ENCODE measurements at regions of chr1 and their contacts with region 1.

Region 1: GRCh38 chr1:67814121-67814772 is 19.0 kb downstream of the GNG12 start:
- DNase-seq: no peak
- ATAC-seq: no peak
- H3K4me3 ChIP-seq: no peak overlapping the region
- H3K27ac ChIP-seq: no peak overlapping the region
- H3K4me1 ChIP-seq: no peaks in the 10 kb centered on the region
- H3K27me3 ChIP-seq: no peaks in the 10 kb centered on the region
- CTCF ChIP-seq: no peak
- EP300 ChIP-seq: no peak
- POLR2A ChIP-seq: no peak
- RAD21 ChIP-seq: no peak

Region 2: GRCh38 chr1:67645495-67646144 is 168.6 kb before region 1 on chr1:
- CTCF ChIA-PET with region 1: no interaction called
- POLR2A ChIA-PET with region 1: no interaction called
- RAD21 ChIA-PET with region 1: no interaction called
- SMC1A ChIA-PET with region 1: no interaction called
- in situ Hi-C with region 1: no loop called
- intact Hi-C with region 1: no loop called
- DNase-seq: no peak
- ATAC-seq: no peak
- H3K4me3 ChIP-seq: no peak overlapping the region
- H3K27ac ChIP-seq: no peak overlapping the region
- H3K4me1 ChIP-seq: no peaks in the 10 kb centered on the region
- H3K27me3 ChIP-seq: no peaks in the 10 kb centered on the region; a peak in 1 of 4 replicates
- CTCF ChIP-seq: no peak
- EP300 ChIP-seq: no peak
- POLR2A ChIP-seq: no peak
- RAD21 ChIP-seq: no peak

Region 3: DNA sequence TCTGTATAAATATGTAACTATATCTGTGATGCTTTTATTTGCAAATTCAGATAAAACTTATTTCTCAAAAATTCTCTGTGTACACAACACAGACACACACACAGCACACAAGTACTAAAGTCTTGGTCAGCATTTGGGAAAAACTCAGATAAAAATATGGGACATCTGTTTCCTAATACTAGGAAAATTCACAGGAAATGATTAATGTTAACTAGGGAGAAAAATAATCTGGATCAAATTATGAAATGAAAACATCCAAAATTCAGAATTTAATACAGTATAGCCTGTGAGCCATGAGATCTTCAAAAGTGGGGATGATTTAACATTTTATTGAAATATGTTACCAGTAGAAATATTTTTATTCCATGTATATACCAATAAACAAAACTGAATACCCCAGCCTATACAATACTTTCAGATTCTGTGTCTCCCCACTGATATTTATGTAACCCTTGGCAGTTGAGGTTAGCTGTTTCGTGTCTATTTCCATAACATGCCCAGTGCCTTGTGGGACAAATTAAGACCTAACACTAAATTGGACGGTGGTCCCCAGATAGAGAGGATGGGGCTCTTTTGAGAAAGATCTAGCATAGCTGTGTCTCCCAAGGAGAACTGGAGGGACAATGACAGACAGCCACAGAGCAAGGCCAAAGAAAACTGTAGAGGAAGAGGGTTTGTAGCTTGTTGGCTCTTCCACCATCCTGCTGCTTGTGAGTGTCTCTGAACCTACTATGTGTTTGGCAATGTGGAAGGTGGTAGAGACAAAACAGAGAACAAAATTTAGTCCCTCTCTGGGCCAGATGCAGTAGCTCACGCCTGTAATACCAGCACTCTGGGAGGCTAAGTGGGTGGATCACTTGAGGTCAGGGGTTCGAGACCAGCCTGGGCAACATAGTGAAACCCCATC is 28.1 kb before region 1 on chr1:
- CTCF ChIA-PET with region 1: interaction called, 14 read pairs
- POLR2A ChIA-PET with region 1: interaction called, 24 read pairs
- RAD21 ChIA-PET with region 1: interaction called, 87 read pairs
- SMC1A ChIA-PET with region 1: interaction called, 1,058 read pairs
- in situ Hi-C with region 1: no loop called
- intact Hi-C with region 1: no loop called
- DNase-seq: no peak
- ATAC-seq: peak; percentile 14; the same call in 2 of the 3 replicates
- H3K4me3 ChIP-seq: no peak overlapping the region
- H3K27ac ChIP-seq: no peak overlapping the region
- H3K4me1 ChIP-seq: no peaks in the 10 kb centered on the region
- H3K27me3 ChIP-seq: no peaks in the 10 kb centered on the region
- CTCF ChIP-seq: no peak
- EP300 ChIP-seq: no peak
- POLR2A ChIP-seq: no peak
- RAD21 ChIP-seq: no peak

Region 4: GRCh38 chr1:67803380-67804279 is 10.6 kb before region 1 on chr1:
- CTCF ChIA-PET with region 1: interaction called, 42 read pairs
- POLR2A ChIA-PET with region 1: interaction called, 36 read pairs
- RAD21 ChIA-PET with region 1: interaction called, 15 read pairs
- SMC1A ChIA-PET with region 1: interaction called, 93 read pairs
- in situ Hi-C with region 1: no loop called
- intact Hi-C with region 1: no loop called
- DNase-seq: no peak
- ATAC-seq: peak; percentile 19; the same call in 2 of the 3 replicates
- H3K4me3 ChIP-seq: no peak overlapping the region
- H3K27ac ChIP-seq: no peak overlapping the region
- H3K4me1 ChIP-seq: no peaks in the 10 kb centered on the region
- H3K27me3 ChIP-seq: no peaks in the 10 kb centered on the region; a peak in 1 of 4 replicates
- CTCF ChIP-seq: no peak
- EP300 ChIP-seq: no peak
- POLR2A ChIP-seq: no peak
- RAD21 ChIP-seq: no peak

Region 5: GRCh38 chr1:67832737-67833601 is 18.7 kb after region 1 on chr1 and contains the start of gene GNG12:
- CTCF ChIA-PET with region 1: interaction called, 34 read pairs
- POLR2A ChIA-PET with region 1: interaction called, 155 read pairs
- RAD21 ChIA-PET with region 1: interaction called, 195 read pairs
- SMC1A ChIA-PET with region 1: interaction called, 241 read pairs
- in situ Hi-C with region 1: no loop called
- intact Hi-C with region 1: no loop called
- DNase-seq: no peak
- ATAC-seq: peak; percentile 78
- H3K4me3 ChIP-seq: no peak within 1 kb of the TSS
- H3K27ac ChIP-seq: no peak within 1 kb of the TSS
- H3K4me1 ChIP-seq: no peaks in the 10 kb centered on the region
- H3K27me3 ChIP-seq: peaks cover 6 to 11% of the 10 kb centered on the region in 2 experiments; a peak in 3 of 4 replicates
- CTCF ChIP-seq: no peak
- EP300 ChIP-seq: no peak
- POLR2A ChIP-seq: no peak
- RAD21 ChIP-seq: no peak
- polyA plus RNA-seq, gene GNG12: 0.22 to 0.27 TPM

Region 6: GRCh38 chr1:67937651-67938050 is 123.4 kb after region 1 on chr1:
- CTCF ChIA-PET with region 1: no interaction called
- POLR2A ChIA-PET with region 1: no interaction called
- RAD21 ChIA-PET with region 1: no interaction called
- SMC1A ChIA-PET with region 1: no interaction called
- in situ Hi-C with region 1: no loop called
- intact Hi-C with region 1: no loop called
- DNase-seq: no peak
- ATAC-seq: no peak
- H3K4me3 ChIP-seq: no peak overlapping the region
- H3K27ac ChIP-seq: no peak overlapping the region
- H3K4me1 ChIP-seq: no peaks in the 10 kb centered on the region
- H3K27me3 ChIP-seq: no peaks in the 10 kb centered on the region; a peak in 2 of 4 replicates
- CTCF ChIP-seq: no peak
- EP300 ChIP-seq: no peak
- POLR2A ChIP-seq: no peak
- RAD21 ChIP-seq: no peak

Region 7: DNA sequence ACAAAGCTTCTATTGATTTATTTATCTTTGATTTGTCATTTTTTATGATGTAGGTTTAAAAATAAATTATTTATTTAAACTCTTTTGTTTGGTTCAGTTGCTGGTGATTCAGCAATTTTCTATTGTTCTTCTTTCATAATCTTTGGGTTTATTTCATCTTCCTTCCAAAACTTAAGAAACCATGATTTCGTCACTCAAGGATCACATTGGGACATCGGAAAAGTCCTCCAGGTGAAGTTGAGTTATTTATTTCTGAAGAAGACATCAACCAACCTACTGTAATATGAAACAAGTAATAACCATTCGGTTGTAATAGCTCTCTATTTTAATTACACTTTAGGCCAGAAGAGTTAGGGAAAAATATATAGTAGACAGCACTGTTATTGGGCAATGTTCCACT is 441.1 kb after region 1 on chr1:
- CTCF ChIA-PET with region 1: no interaction called
- POLR2A ChIA-PET with region 1: interaction called, 10 read pairs
- RAD21 ChIA-PET with region 1: no interaction called
- SMC1A ChIA-PET with region 1: no interaction called
- in situ Hi-C with region 1: no loop called
- intact Hi-C with region 1: no loop called
- DNase-seq: no peak
- ATAC-seq: no peak
- H3K4me3 ChIP-seq: no peak overlapping the region
- H3K27ac ChIP-seq: no peak overlapping the region
- H3K4me1 ChIP-seq: no peaks in the 10 kb centered on the region
- H3K27me3 ChIP-seq: no peaks in the 10 kb centered on the region
- CTCF ChIP-seq: no peak
- EP300 ChIP-seq: no peak
- POLR2A ChIP-seq: no peak
- RAD21 ChIP-seq: no peak